ENCODE measurements at regions of chr1 and their contacts with region 1.

Region 1: DNA sequence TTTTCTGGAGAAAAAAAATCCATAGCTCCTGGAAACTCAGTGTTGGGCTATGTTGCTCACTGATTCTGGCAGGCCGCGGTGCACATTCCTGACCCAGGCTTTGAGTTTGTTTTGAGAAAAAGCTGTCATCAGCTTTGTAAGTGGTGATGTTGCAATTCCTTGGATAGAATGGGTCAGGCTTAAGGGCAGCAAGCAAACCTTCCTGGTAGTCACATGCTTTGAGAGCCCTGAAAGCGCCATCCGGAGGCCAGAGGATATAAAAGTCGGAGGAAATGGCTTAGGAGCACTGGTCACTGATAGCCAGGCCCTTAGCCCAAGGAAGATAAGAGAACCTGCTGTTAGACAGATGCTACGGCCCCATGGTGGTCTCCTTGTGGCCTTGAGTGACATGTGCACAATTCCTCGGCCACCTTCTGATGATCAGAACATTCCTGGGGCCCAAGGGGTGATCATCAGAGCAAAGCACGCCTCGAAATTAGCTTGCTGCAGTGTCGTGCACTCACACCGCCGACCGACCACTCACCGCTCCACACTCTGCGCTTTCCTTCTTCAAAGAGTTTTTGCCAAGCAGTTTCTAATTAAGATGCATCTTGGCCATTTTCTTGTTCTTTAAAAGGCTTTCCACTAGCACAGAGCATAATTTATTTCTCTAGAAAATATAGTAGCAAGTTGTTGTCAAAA is 78.6 kb downstream of the MAN1C1 start:
- DNase-seq: no peak
- ATAC-seq: no peak
- H3K4me3 Mint-ChIP-seq: peak overlapping the region; percentile 43
- H3K27ac Mint-ChIP-seq: peak overlapping the region; percentile 70
- H3K4me1 Mint-ChIP-seq: peaks cover 56% of the 10 kb centered on the region
- H3K27me3 Mint-ChIP-seq: no peaks in the 10 kb centered on the region

Region 2: DNA sequence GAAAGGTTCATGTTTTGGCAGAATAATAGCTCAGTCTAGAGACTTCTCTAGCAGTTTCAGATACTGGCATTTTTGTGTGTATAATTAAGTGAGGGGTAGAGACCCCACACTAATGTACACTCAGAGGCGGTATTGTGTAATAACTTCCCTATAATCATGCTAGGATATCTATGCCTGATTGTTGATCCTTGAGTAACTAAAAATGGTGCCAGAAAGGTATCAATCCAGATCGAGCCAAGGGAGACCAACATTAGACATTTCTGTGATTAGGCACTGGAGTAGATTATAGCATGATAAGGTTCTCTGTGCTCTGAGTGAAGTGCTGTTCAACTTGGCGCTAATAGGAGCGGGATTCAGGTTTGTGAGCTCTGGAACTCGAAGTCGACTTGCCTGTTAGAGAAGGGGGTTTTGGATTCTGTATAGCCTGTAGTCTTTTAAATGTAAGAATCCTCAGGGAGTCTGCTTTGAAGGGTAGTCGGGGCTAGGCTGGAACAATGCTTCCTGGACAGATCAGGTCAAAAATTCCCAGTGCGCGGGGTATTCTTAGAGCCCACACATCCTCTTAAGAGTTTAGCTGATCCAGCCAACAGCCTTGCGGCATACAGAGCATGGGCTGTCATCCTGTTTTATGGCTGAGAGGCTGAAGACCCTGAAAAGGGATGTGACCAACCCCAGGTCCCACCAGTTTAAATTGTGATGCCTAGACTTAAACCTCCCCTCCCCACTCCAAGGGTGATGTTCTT is 54.4 kb before region 1 on chr1:
- CTCF ChIA-PET with region 1: no interaction called
- POLR2A ChIA-PET with region 1: no interaction called
- intact Hi-C with region 1: no loop called
- DNase-seq: no peak
- ATAC-seq: no peak
- H3K4me3 Mint-ChIP-seq: no peak overlapping the region
- H3K27ac Mint-ChIP-seq: no peak overlapping the region
- H3K4me1 Mint-ChIP-seq: peaks cover 71% of the 10 kb centered on the region
- H3K27me3 Mint-ChIP-seq: no peaks in the 10 kb centered on the region

Region 3: DNA sequence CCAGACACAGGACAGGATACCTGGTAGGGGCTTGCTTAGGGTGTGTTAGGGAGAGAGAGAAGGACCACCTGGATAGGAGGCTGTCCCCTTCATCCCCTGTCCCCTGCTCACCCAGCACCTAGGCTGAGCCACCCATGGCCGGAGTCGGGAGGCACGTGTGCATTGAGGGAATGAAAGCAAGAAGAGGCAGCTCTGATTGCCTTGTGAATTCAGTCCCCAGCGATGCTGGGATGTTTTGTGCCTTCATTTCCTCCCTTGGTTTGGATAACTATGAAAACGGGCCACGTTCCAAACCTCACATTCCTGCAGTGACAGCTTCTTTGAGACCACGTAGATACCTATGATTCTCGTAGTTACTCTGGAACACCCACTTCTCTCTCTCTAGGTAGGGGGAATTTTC is 11.5 kb before region 1 on chr1:
- CTCF ChIA-PET with region 1: interaction called, 16 read pairs
- POLR2A ChIA-PET with region 1: no interaction called
- intact Hi-C with region 1: loop called in 1 of 2 experiments (anchors 1 kb)
- DNase-seq: no peak
- ATAC-seq: no peak
- H3K4me3 Mint-ChIP-seq: no peak overlapping the region
- H3K27ac Mint-ChIP-seq: no peak overlapping the region
- H3K4me1 Mint-ChIP-seq: peaks cover 61% of the 10 kb centered on the region
- H3K27me3 Mint-ChIP-seq: peaks cover 2% of the 10 kb centered on the region

Measured in activated CD4-positive, alpha-beta T cell treated with anti-CD3 and anti-CD28 coated beads for 36 hours (primary cell).